ENCODE measurements at regions of chr17 and their contacts with region 1.

Region 1: GRCh38 chr17:68247445-68248198 is at the start of gene AMZ2:
- DNase-seq: peak; percentile 80 to 99 (median 96)

Region 2: GRCh38 chr17:68205251-68205807 is 42.3 kb before region 1 on chr17:
- intact Hi-C with region 1: loop called (anchors 1 kb)
- DNase-seq: peak; percentile 88 to 98 (median 96)

Region 3: GRCh38 chr17:68277807-68278206 is 30.2 kb after region 1 on chr17:
- intact Hi-C with region 1: no loop called
- DNase-seq: no peak